Activated CD4-positive, alpha-beta T cell treated with anti-CD3 and anti-CD28 coated beads for 36 hours (primary cell): ENCODE measurements at regions of chr2 and their contacts with region 1.

Region 1: DNA sequence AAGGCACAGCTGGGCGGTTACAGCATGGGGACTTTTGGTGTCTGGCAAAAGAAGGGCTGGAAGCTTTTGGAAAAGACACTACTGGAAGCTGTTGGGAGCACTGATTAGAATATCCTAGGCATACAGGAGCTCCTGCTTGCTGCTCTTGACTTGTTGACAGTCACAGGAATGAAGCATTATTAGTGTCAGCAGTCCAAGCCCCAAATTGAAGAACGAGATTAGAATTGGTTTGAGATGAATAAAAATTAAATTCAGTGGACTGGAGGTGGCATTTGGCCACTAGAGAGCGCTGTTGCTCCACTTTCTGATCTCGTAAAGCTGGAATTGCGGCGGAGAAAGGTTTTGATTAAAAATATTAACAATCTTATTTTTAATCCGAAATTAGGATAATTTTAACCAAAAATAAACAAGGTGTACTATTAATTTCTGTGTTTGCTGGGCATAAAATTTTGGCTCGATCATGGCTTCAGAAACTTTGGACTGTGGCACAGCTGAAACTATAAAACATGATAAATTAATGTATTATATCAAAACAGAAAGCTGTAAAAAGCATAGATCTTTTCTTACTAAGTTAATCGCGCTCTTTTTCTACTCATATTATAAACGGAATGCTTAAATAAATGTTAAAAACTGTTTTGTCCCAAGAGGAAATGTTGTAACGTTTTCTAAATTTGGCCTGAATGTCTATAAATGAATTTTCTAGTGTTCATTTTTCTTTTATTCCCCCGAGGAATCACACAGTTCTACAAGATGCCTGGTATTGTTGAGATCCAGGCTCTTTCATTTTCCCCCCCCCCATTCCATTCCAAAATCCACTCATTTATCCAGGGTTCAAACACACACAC is 2.4 kb upstream of the HOXD8 start:
- DNase-seq: peak; percentile 81
- ATAC-seq: no peak
- H3K4me3 Mint-ChIP-seq: no peak overlapping the region
- H3K27ac Mint-ChIP-seq: no peak overlapping the region
- H3K4me1 Mint-ChIP-seq: peaks cover 31% of the 10 kb centered on the region
- H3K27me3 Mint-ChIP-seq: peaks cover 67% of the 10 kb centered on the region

Region 2: GRCh38 chr2:176079831-176080539 is 47.2 kb before region 1 on chr2:
- CTCF ChIA-PET with region 1: interaction called, 9 read pairs
- POLR2A ChIA-PET with region 1: no interaction called
- intact Hi-C with region 1: loop called (anchors 2 to 5 kb)
- DNase-seq: peak; percentile 63
- ATAC-seq: peak; percentile 47
- H3K4me3 Mint-ChIP-seq: peak overlapping the region; percentile 46
- H3K27ac Mint-ChIP-seq: no peak overlapping the region
- H3K4me1 Mint-ChIP-seq: peaks cover 13% of the 10 kb centered on the region
- H3K27me3 Mint-ChIP-seq: peaks cover 70% of the 10 kb centered on the region

Region 3: GRCh38 chr2:176140513-176141317 is 13.6 kb after region 1 on chr2:
- CTCF ChIA-PET with region 1: interaction called, 25 read pairs
- POLR2A ChIA-PET with region 1: no interaction called
- intact Hi-C with region 1: no loop called
- DNase-seq: peak; percentile 85
- ATAC-seq: peak; percentile 93
- H3K4me3 Mint-ChIP-seq: no peak overlapping the region
- H3K27ac Mint-ChIP-seq: no peak overlapping the region
- H3K4me1 Mint-ChIP-seq: peaks cover 17% of the 10 kb centered on the region
- H3K27me3 Mint-ChIP-seq: peaks cover 77% of the 10 kb centered on the region

Region 4: GRCh38 chr2:176213406-176213805 is 86.3 kb after region 1 on chr2:
- CTCF ChIA-PET with region 1: no interaction called
- POLR2A ChIA-PET with region 1: no interaction called
- intact Hi-C with region 1: no loop called
- DNase-seq: no peak
- ATAC-seq: no peak
- H3K4me3 Mint-ChIP-seq: no peak overlapping the region
- H3K27ac Mint-ChIP-seq: no peak overlapping the region
- H3K4me1 Mint-ChIP-seq: no peaks in the 10 kb centered on the region
- H3K27me3 Mint-ChIP-seq: peaks cover 17% of the 10 kb centered on the region

Region 5: DNA sequence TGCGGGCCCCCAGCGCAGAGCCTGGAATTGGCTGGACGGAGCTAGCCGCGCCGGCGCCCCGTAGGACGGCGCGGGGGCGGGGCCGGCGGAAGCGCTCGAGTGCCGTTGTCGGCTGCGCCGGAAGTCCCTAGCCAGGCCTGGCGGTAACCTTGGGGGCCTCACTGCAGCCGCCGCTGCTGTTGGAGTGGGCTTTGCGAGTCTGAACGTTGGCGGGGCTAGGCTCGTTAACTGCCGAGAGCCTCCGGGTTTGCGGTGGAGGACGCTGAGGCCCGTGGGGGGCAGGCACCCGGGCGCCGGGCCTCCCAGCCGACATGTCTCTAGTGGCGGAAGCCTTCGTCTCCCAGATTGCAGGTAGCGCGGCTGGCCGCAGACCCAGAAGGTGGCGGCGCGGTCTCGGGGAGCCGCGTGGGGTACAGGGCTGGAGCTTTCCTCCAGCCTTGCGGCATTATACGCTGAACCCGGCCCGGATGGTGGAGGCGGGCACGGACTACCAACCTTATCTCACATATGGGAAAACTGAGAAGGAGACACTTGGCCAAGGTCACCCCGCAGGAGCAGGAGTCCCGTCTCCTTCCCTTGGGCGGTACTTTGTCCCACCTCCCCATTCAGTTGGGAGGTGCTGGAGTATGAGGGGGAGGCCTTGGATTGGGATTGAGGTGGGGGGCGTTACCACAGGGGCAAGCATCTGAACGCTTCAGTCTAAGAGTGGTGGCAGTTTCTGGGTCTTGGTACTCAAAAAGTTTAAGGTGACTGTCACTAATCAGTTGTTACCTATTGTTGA is 142.4 kb after region 1 on chr2 and contains the start of gene MTX2:
- CTCF ChIA-PET with region 1: interaction called, 3 read pairs
- POLR2A ChIA-PET with region 1: no interaction called
- intact Hi-C with region 1: loop called in 1 of 2 experiments (anchors 2 kb)
- DNase-seq: peak; percentile 84
- ATAC-seq: peak; percentile 95
- H3K4me3 Mint-ChIP-seq: peak within 1 kb of the TSS; percentile 98
- H3K27ac Mint-ChIP-seq: peak within 1 kb of the TSS; percentile 94
- H3K4me1 Mint-ChIP-seq: peaks cover 29% of the 10 kb centered on the region
- H3K27me3 Mint-ChIP-seq: peaks cover 10% of the 10 kb centered on the region
- total RNA-seq, gene MTX2: 22.6 to 28.6 TPM

Region 6: DNA sequence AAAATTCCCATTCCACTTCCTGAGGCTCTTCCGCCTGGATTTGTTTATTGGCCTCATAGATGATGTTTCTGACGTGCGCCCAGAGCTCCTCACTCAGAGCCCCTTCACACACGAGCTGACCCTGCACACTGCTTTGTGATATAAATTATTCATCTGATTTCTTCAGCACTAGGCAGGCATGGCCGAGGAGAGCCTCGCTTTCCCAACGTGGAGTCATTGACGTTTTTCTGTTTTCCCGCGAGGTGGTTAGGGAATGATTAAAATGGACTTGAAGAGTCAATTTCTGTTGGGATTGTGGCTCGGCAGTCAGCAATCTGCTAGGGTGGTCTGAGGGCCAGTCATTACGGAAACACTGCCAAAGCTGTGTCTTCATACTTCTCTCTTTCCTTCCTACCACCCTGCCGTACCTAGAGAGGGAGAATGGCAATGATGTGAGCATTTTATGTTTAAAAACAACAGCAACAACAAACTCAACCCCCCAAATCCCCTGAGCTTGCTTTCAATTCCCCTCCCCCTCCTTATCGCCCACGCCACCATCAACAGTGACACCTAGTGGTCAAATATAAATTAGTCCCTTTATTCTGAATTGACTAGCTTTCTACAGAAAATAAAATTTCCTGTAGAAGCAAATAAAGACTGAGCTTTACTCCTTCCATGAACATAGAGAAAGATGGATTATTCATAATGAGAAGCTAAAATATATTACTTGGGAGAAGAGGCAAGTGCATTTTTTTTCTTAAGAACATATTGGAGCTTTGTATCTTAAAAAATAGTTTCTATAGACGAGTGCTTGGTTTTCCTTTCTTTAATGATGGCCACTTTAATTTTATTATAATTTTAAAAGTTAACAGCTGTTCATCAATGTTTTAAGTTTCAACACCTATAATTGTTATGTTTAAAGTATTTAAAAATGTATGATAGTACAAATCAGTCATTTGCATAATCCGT is 427.2 kb after region 1 on chr2:
- CTCF ChIA-PET with region 1: interaction called, 20 read pairs
- POLR2A ChIA-PET with region 1: no interaction called
- intact Hi-C with region 1: loop called (anchors 1 to 5 kb)
- DNase-seq: peak; percentile 56
- ATAC-seq: peak; percentile 49
- H3K4me3 Mint-ChIP-seq: peak overlapping the region; percentile 60
- H3K27ac Mint-ChIP-seq: peak overlapping the region; percentile 26
- H3K4me1 Mint-ChIP-seq: peaks cover 11% of the 10 kb centered on the region
- H3K27me3 Mint-ChIP-seq: peaks cover 33% of the 10 kb centered on the region

Region 7: DNA sequence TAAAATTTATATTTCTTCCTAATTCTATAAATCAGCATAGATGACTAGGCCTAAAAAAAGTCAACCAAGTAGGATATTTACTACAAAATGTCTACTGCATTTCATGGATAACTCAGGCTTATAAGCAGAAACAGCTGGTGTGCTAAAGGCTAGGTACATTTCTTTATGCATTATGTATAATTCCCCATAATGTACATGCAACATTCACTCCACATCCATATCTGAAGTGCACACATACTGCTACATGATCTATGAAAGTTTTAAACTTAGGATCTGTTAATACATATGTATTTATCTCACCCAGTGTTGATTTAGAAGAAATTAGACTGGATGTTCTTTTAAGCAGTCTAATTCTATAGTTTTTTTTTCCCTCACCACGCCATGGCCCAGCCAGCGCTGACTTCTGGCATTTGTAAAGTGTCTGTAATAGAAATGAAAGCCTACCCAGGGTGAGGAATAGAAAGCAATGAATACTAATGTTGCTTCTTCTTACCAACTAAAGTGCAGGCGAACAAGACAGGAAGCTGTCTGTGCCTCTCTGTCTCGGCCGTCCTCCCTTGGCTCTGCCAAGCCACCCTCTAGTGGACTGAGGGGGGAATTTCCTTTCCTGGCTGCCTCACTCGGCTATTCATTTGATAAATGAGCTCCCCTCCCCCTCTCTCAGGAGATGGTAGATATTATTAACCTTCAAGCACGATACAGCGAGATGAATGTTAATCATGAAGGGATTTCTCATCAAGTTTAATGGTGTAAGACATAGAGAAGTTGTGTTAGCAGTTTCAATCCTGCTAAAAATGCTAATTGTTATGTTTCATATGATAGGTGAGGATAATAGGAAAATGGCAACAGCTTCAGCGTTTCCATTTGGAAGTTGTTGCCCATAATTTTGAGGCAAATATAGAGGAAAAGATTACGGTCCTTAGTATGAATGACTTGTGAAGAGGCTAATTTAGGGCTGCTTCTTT is 526.6 kb after region 1 on chr2:
- CTCF ChIA-PET with region 1: interaction called, 68 read pairs
- POLR2A ChIA-PET with region 1: no interaction called
- intact Hi-C with region 1: loop called (anchors 1 to 2 kb)
- DNase-seq: peak; percentile 60
- ATAC-seq: peak; percentile 69
- H3K4me3 Mint-ChIP-seq: no peak overlapping the region
- H3K27ac Mint-ChIP-seq: no peak overlapping the region
- H3K4me1 Mint-ChIP-seq: peaks cover 8% of the 10 kb centered on the region
- H3K27me3 Mint-ChIP-seq: peaks cover 41% of the 10 kb centered on the region